ENCODE measurements at regions of chr15 and their contacts with region 1.

Region 1: DNA sequence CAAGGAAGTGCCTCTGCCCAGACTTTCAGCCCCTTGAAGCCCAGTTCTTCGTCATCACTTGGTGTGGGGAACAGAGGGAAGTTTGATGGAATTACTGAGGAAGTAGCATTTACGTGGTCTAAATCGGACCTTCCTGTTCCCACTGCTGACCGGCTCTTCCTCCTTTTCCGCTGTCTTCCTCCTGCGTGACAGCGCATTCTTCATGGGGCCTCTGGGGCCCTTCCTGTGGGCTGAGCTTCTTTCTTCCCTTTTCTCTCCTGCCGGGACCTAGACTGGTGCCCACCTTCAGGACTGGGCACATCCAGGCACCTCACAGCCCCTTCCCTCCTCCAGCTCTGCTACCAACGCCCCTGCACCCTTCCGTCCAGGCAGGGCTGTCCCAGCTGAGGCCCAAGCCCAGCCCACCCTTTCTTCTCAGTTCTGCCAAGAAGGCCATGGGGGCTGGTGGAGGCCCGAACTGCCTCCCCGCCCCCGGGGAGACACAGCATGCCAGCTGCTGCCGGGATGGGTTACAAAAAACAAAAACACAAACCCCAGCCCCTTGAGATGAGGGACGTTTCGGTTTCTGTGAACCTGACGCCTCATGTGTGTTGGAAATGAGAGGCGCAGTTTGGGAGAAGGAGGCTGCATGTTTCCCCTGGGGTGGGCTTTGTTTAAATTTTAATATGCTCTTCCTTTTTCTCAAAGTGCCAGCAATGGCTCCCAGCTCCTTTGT is 19.1 kb downstream of the ZNF710 start:
- DNase-seq: peak in 1 of 3 donors; percentile 30
- H3K4me3 ChIP-seq: peak overlapping the region in 2 of 7 experiments; percentile 8 to 39
- H3K27ac ChIP-seq: no peak overlapping the region
- H3K4me1 ChIP-seq: peaks cover 2 to 56% (median 22%) of the 10 kb centered on the region in 4 experiments
- H3K27me3 ChIP-seq: no peaks in the 10 kb centered on the region

Region 2: DNA sequence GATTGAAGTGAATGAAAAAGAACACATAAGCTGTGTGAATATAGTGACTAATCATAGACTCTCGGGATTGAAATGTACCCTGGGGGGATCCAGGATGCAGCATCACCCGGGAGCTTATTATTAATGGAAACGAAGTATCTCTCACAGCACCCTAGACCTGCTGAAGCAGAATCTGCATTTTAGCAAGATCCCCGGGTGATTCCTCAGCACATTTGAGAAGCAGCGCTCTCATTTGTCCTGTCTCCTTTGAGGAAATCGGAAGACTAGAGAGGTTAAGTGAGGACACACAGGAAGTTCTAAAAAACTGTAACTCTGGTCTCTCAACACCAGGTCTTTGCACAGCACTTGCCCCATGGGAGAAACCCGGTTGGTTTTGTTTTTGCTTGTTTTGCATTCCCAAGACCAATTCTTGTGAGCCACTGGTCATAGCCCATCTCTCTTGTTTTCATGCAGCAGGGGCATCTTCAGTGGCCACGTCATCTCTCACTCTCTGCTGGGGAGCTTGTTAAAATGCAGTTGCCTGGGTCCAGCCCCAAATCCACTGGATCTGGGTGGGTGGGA is 11.1 kb after region 1 on chr15:
- CTCF ChIA-PET with region 1: interaction called, 63 read pairs
- POLR2A ChIA-PET with region 1: interaction called, 4 read pairs
- DNase-seq: peak in 2 of 3 donors; percentile 40 to 50
- H3K4me3 ChIP-seq: no peak overlapping the region
- H3K27ac ChIP-seq: no peak overlapping the region
- H3K4me1 ChIP-seq: peaks cover 18 to 53% (median 44%) of the 10 kb centered on the region in 4 experiments
- H3K27me3 ChIP-seq: no peaks in the 10 kb centered on the region

Region 3: DNA sequence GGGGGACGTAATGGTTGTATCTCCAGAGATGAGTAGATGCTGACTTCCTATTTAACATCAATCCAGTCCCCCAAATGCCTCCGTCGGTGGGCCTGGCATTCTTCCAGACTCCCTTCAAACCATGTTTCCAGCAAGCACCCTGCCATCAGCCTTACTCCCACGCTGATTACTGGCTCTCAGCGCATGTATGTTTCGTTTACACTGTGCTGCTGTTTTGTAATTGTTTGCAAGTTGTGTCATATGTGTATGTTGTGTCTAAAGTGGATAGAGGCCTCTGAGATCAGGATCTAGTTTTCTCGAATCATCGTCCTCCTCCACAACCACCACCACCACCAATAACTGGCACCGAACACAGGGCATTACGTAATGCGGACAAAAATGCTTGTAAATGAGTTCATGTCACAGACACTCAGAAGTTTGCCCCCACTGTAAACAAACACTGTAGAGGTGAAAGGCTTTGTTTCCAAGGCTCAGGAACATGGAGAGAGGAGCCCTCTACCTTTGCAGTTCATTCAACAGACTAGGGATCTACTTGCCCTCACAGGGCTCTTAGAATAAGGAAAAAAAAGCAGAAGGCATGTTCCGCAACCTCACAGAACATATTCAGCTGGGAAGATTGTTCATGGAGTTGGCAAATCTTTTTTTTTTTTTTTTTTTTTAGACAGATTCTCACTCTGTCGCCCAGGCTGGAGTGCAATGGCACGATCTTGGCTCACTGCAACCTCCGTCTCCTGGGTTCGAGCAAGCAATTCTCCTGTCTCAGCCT is 134.9 kb after region 1 on chr15:
- CTCF ChIA-PET with region 1: no interaction called
- POLR2A ChIA-PET with region 1: no interaction called
- DNase-seq: peak in 1 of 3 donors; percentile 13
- H3K4me3 ChIP-seq: no peak overlapping the region
- H3K27ac ChIP-seq: no peak overlapping the region
- H3K4me1 ChIP-seq: peaks cover 0 to 11% (median 2%) of the 10 kb centered on the region in 4 experiments
- H3K27me3 ChIP-seq: no peaks in the 10 kb centered on the region

Measured in common myeloid progenitor, CD34-positive (primary cell).